ENCODE measurements at regions of chr16 and their contacts with region 1.

Region 1: DNA sequence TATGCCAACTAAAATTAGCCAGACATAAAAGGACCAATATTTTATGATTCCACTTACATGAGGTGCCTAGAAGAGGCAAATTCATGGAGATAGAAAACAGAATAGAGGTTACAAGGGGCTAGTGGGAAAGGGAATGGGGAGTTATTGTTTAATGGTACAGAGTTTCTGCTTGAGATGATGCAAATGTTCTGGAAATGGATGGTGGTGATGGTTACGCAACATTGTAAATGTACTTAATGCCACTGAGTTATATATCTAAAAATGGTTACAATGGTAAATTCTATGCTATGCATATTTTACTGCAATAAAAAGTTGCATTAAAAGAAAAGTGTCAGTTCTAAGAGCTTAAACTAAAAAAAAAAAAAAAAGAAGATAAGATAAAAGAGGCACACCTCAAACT is 17.9 kb downstream of the MT1X start:
- DNase-seq: no peak
- ATAC-seq: no peak
- H3K4me3 Mint-ChIP-seq: no peak overlapping the region
- H3K27ac Mint-ChIP-seq: no peak overlapping the region
- H3K4me1 Mint-ChIP-seq: peaks cover 11% of the 10 kb centered on the region
- H3K27me3 Mint-ChIP-seq: no peaks in the 10 kb centered on the region

Region 2: GRCh38 chr16:56450986-56451752 is 249.0 kb before region 1 on chr16 and contains the starts of genes NUDT21 and OGFOD1:
- CTCF ChIA-PET with region 1: interaction called, 15 read pairs
- POLR2A ChIA-PET with region 1: no interaction called
- DNase-seq: peak; percentile 96
- ATAC-seq: peak; percentile 99
- H3K4me3 Mint-ChIP-seq: peak within 1 kb of the TSS; percentile 90
- H3K27ac Mint-ChIP-seq: peak within 1 kb of the TSS; percentile 93
- H3K4me1 Mint-ChIP-seq: peaks cover 53% of the 10 kb centered on the region
- H3K27me3 Mint-ChIP-seq: no peaks in the 10 kb centered on the region
- total RNA-seq, gene NUDT21: 237 TPM
- total RNA-seq, gene OGFOD1: 41.8 to 42.0 TPM

Region 3: GRCh38 chr16:56576585-56577293 is 123.5 kb before region 1 on chr16:
- CTCF ChIA-PET with region 1: interaction called, 143 read pairs
- POLR2A ChIA-PET with region 1: interaction called, 5 read pairs
- DNase-seq: peak; percentile 93
- ATAC-seq: peak; percentile 100
- H3K4me3 Mint-ChIP-seq: no peak overlapping the region
- H3K27ac Mint-ChIP-seq: peak overlapping the region; percentile 72
- H3K4me1 Mint-ChIP-seq: peaks cover 10% of the 10 kb centered on the region
- H3K27me3 Mint-ChIP-seq: peaks cover 17% of the 10 kb centered on the region

Region 4: DNA sequence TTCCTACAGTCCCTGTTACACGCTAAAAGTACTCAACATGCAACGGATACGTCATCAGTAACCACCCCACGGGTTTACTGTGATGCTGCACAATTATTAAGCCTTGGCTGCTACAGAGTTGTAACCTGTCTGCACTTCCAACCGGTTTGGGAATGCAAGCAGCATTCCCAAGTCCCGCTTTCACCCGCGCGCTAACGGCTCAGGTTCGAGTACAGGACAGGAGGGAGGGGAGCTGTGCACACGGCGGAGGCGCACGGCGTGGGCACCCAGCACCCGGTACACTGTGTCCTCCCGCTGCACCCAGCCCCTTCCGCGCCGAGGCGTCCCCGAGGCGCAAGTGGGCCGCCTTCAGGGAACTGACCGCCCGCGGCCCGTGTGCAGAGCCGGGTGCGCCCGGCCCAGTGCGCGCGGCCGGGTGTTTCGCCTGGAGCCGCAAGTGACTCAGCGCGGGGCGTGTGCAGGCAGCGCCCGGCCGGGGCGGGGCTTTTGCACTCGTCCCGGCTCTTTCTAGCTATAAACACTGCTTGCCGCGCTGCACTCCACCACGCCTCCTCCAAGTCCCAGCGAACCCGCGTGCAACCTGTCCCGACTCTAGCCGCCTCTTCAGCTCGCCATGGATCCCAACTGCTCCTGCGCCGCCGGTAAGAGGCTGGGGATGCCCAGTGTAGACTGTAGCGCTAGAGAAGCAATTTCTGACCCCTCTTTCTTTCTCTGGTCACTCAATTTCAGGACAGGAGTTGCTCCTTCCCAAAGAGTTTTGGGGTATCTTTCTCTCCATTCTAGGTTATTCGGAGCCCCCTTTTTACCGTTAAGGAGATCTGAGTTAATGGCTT is 91.9 kb before region 1 on chr16 and contains the start of gene MT2A:
- CTCF ChIA-PET with region 1: interaction called, 12 read pairs
- POLR2A ChIA-PET with region 1: interaction called, 4 read pairs
- DNase-seq: peak; percentile 94
- ATAC-seq: peak; percentile 90
- H3K4me3 Mint-ChIP-seq: peak within 1 kb of the TSS; percentile 93
- H3K27ac Mint-ChIP-seq: peak within 1 kb of the TSS; percentile 87
- H3K4me1 Mint-ChIP-seq: peaks cover 43% of the 10 kb centered on the region
- H3K27me3 Mint-ChIP-seq: no peaks in the 10 kb centered on the region
- total RNA-seq, gene MT2A: 186 to 210 TPM

Region 5: GRCh38 chr16:56673921-56674320 is 26.3 kb before region 1 on chr16:
- CTCF ChIA-PET with region 1: interaction called, 59 read pairs
- POLR2A ChIA-PET with region 1: no interaction called
- DNase-seq: peak; percentile 51
- ATAC-seq: peak; percentile 44
- H3K4me3 Mint-ChIP-seq: no peak overlapping the region
- H3K27ac Mint-ChIP-seq: no peak overlapping the region
- H3K4me1 Mint-ChIP-seq: peaks cover 38% of the 10 kb centered on the region
- H3K27me3 Mint-ChIP-seq: peaks cover 51% of the 10 kb centered on the region

Region 6: GRCh38 chr16:56716761-56717160 is 16.6 kb after region 1 on chr16:
- CTCF ChIA-PET with region 1: interaction called, 23 read pairs
- POLR2A ChIA-PET with region 1: no interaction called
- DNase-seq: no peak
- ATAC-seq: no peak
- H3K4me3 Mint-ChIP-seq: no peak overlapping the region
- H3K27ac Mint-ChIP-seq: no peak overlapping the region
- H3K4me1 Mint-ChIP-seq: no peaks in the 10 kb centered on the region
- H3K27me3 Mint-ChIP-seq: no peaks in the 10 kb centered on the region

Region 7: GRCh38 chr16:56789360-56789759 is 89.2 kb after region 1 on chr16:
- CTCF ChIA-PET with region 1: interaction called, 16 read pairs
- POLR2A ChIA-PET with region 1: no interaction called
- DNase-seq: peak; percentile 57
- ATAC-seq: peak; percentile 69
- H3K4me3 Mint-ChIP-seq: no peak overlapping the region
- H3K27ac Mint-ChIP-seq: no peak overlapping the region
- H3K4me1 Mint-ChIP-seq: no peaks in the 10 kb centered on the region
- H3K27me3 Mint-ChIP-seq: no peaks in the 10 kb centered on the region